ENCODE measurements at regions of chr16 and their contacts with region 1.

Region 1: DNA sequence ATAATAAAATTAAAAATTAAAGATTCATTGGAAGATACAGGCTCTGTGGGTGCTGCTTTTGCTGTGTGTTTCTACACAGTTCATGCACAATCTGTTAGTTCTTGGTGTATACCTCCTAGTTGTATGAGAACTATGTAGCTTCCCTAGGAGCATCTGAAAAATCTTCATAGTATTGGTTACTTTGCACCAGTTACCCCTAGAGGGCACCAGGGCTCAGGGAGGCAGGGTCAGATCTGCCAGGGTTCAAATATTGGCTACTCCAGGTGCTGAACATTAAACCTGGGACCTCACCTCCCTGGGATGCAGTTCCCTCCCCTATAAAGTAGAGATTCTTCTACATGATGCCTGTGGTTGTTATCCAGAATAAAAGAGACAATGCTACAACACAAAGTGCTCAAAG is 583.0 kb upstream of the CDH11 start:
- DNase-seq: no peak
- ATAC-seq: no peak

Region 2: DNA sequence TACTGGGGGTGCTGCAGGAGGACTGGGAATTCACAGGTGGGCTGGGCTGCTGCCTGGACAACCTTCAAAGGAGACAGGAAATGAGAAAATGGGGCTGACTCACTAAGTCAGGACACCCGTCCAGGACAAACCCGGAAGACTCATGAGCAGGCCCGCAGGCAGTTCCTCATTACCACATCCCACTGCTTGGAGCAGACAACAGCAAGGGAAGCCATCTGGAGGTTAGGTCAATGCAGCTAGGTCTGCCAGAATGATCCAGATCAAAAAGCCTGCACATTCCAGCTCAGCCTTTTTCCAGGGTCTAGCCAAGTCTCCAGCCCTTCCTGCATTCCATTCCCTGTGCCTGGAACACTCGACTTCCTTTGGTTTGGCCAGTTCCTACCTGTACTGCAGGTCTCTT is 46.5 kb before region 1 on chr16:
- intact Hi-C with region 1: no loop called
- DNase-seq: no peak
- ATAC-seq: peak; percentile 39

Region 3: DNA sequence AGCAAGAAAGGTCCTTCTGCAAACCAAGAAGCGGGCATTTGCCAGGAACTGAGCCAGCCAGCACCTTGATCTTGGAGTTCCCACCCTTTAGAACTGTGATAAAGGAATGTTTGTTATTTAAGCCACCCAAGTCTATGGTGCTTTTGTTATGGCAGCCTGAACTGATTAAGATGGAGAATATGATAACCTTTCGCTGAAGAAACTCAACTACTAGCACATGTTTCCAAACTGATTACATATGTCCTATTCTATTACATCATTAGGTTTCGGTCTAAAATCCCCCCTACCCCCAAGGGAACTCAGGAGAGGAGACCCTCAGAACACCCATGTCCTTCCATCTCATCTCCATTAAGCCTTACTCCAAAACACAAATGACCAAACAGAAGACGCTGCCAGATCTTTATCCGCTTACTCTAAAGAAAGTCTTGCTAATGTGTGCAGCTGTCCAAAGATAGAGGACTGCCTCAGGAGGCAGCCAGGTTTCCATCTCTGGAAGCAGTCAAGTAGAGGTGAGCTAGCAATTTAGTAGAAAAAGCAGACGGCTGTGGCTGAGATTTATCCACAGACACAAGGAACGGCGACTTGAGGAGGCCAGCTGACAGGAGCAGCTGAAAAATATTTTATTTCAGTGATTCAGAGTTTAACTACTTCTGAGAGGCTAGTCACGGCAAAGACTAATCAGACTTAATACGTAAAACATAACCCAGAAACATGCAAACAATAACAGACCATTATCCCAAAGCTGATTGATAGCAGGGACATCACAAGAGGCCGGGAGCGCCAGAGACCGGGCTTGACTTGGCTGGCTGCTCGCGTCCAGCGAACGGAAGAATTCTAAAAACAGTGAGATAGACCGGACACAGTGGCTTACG is 50.2 kb after region 1 on chr16:
- intact Hi-C with region 1: no loop called
- DNase-seq: no peak
- ATAC-seq: no peak

Region 4: DNA sequence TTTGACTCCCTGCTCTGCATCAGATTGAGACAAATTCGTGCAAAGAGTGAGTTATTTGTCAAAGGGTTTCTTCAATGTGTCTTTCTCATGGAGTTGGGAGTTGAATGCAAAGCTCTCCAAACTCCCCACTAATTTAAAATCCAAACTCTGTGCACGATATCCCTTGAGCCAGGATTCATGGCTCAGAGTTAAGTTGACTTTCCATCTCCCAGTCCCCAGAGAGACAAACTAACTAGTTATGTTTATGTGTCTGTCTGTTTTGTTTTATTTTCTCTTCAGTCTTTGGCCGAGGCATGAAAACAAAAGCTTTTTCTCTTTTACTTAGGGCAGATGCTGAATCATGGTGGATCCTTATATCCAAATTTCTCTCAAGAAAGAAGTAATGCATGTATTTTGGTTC is 91.6 kb after region 1 on chr16:
- intact Hi-C with region 1: no loop called
- DNase-seq: no peak
- ATAC-seq: no peak

Region 5: GRCh38 chr16:66270333-66270927 is 565.6 kb after region 1 on chr16:
- intact Hi-C with region 1: loop called (anchors 5 kb)
- DNase-seq: peak; percentile 89
- ATAC-seq: peak; percentile 72

Measured in Right ventricle myocardium inferior (tissue), 1 donor.